CD14-positive monocyte (primary cell): ENCODE measurements at regions of chr1 and their contacts with region 1.

Region 1: DNA sequence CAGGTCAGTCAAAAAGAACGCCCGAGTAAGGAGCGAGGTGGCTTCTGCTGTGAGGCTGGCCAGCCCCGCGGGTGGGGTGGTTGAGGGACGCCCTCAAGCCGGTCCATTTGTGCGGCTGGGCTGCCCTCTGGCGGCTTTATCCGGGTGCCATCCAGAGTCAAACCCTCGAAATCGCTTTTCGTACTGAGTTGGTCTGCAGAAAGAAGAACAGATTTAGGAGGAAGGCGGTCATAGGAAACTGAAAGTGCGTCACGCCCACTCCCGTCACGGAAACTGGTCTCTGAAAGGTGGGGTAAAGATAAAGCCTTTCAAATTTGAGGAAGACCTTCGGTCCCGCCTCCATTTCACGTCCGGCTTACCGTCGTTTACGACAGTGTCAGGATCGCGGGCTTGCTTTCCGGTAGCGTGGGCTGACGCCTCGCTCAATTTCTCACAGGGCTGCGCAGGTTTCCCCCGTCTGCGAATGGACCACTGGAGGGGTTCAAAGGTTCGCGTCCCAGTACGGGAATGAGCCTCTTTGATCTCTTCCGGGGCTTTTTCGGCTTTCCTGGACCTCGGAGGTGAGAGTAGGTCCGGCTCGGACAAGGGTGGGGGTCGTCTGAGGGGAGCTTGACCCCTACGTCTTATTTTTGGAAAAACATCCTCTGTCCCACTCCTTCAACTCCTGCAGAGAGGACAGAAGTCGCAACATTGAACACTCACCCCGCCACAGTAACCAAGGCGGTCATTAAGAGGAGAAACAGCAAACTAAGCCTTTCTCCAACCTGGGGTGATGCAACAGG is at the start of gene HAX1:
- DNase-seq: peak; percentile 98 to 99 (median 99)
- H3K4me3 ChIP-seq: peak within 1 kb of the TSS; percentile 71 to 93 (median 76)
- H3K4me3 Mint-ChIP-seq: peak within 1 kb of the TSS; percentile 95 to 98
- H3K27ac ChIP-seq: peak within 1 kb of the TSS; percentile 88 to 94
- H3K27ac Mint-ChIP-seq: peak within 1 kb of the TSS; percentile 96 to 99 (median 97)
- H3K4me1 ChIP-seq: peaks cover 16 to 20% of the 10 kb centered on the region in 2 donors
- H3K4me1 Mint-ChIP-seq: peaks cover 23% of the 10 kb centered on the region
- H3K27me3 ChIP-seq: no peaks in the 10 kb centered on the region
- H3K27me3 Mint-ChIP-seq: peaks cover 0 to 3% (median 0%) of the 10 kb centered on the region in 3 donors
- CTCF ChIP-seq: peak; percentile 83
- polyA plus RNA-seq, gene HAX1: 51.4 to 94.9 (median 91.7) TPM

Region 2: DNA sequence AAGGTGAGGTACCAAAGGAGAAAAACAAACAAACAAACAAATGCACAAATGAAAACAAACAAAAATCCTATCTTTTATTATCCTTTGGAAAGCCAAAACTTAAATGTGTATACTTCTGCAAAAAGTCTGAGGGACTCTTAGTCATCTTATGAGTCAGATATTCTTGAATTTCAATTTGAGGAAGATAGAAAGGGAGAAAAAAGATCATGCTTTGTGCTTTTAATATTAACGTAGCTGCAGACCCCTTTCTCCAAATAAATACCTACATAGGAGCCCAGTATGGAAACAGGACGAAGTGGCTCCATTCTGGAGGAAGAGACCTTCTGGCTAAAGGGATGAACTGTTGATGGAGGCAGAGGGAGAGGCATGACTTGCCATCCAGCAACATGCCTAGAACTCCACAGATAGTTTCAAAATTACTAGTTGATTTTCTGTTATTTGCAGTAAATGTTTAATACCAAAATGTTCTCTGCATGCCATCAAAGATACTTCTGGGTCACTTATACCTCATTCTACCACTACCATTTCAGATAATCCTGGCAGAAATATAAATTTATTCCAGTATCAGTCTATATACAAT is 142.9 kb before region 1 on chr1:
- intact Hi-C with region 1: no loop called
- DNase-seq: peak; percentile 37 to 66 (median 64)
- H3K4me3 ChIP-seq: peak overlapping the region in 2 of 3 experiments; percentile 12 to 66
- H3K4me3 Mint-ChIP-seq: peak overlapping the region in 1 of 2 donors; percentile 80
- H3K27ac ChIP-seq: peak overlapping the region; percentile 32 to 73
- H3K27ac Mint-ChIP-seq: peak overlapping the region; percentile 69 to 94 (median 87)
- H3K4me1 ChIP-seq: peaks cover 17 to 21% of the 10 kb centered on the region in 2 donors
- H3K4me1 Mint-ChIP-seq: peaks cover 15% of the 10 kb centered on the region
- H3K27me3 ChIP-seq: no peaks in the 10 kb centered on the region
- H3K27me3 Mint-ChIP-seq: peaks cover 0 to 1% (median 0%) of the 10 kb centered on the region in 3 donors
- CTCF ChIP-seq: no peak

Region 3: DNA sequence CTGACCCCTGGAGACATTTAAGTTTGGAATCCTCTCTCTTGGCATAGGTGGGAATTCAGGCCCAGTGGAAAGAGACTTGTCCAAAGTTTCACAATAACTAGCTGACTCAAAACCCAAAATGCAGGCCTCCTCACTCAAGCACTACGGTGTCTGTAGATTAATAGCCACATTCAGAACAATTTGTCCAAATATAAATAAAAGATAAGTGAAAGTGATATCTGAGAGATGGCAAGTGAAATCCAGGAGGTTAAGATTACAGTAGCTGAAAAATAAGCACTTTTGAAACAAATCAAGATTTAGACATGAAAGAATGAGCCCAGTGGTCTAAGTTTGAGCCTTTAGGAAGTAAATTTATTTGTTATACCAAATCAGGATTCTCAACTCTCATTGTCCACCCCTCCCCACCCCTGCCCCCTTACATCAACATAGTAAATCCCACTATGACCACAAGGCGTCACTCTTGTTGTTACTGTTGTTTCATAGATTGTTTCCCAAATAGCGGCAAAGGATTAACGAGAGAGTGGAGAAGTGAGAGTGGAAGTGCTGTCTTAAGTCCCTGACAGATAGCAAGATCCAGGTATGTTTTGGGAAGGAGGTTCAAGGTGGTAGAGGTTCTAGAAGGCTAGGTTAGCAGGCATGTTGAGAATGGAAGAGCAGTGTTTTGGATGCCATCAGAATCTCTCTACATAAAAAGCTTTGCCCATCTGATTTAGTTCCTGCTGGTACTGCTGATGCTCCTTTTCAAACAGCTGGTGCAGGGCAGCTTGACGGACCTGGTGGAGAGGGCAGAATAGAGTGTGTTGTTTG is 73.4 kb before region 1 on chr1:
- intact Hi-C with region 1: loop called in 1 of 2 experiments (anchors 5 kb)
- DNase-seq: peak; percentile 44 to 72 (median 63)
- H3K4me3 ChIP-seq: no peak overlapping the region
- H3K4me3 Mint-ChIP-seq: no peak overlapping the region
- H3K27ac ChIP-seq: no peak overlapping the region
- H3K27ac Mint-ChIP-seq: no peak overlapping the region
- H3K4me1 ChIP-seq: peaks cover 6 to 16% of the 10 kb centered on the region in 2 donors
- H3K4me1 Mint-ChIP-seq: peaks cover 12% of the 10 kb centered on the region
- H3K27me3 ChIP-seq: no peaks in the 10 kb centered on the region
- H3K27me3 Mint-ChIP-seq: peaks cover 0 to 1% (median 1%) of the 10 kb centered on the region in 3 donors
- CTCF ChIP-seq: peak; percentile 71

Region 4: GRCh38 chr1:154220071-154220969 is 52.1 kb before region 1 on chr1 and contains the start of gene UBAP2L:
- intact Hi-C with region 1: loop called in 1 of 2 experiments (anchors 5 kb)
- DNase-seq: peak; percentile 98 to 100 (median 100)
- H3K4me3 ChIP-seq: peak within 1 kb of the TSS; percentile 92 to 97 (median 96)
- H3K4me3 Mint-ChIP-seq: peak within 1 kb of the TSS; percentile 82 to 97
- H3K27ac ChIP-seq: peak within 1 kb of the TSS; percentile 100
- H3K27ac Mint-ChIP-seq: peak within 1 kb of the TSS; percentile 99 to 100 (median 99)
- H3K4me1 ChIP-seq: peaks cover 31 to 36% of the 10 kb centered on the region in 2 donors
- H3K4me1 Mint-ChIP-seq: peaks cover 46% of the 10 kb centered on the region
- H3K27me3 ChIP-seq: no peaks in the 10 kb centered on the region
- H3K27me3 Mint-ChIP-seq: peaks cover 0 to 5% (median 2%) of the 10 kb centered on the region in 3 donors
- CTCF ChIP-seq: no peak
- polyA plus RNA-seq, gene UBAP2L: 40.1 to 200 (median 46.8) TPM

Region 5: GRCh38 chr1:154241703-154242351 is 30.6 kb before region 1 on chr1:
- intact Hi-C with region 1: no loop called
- DNase-seq: no peak
- H3K4me3 ChIP-seq: no peak overlapping the region
- H3K4me3 Mint-ChIP-seq: no peak overlapping the region
- H3K27ac ChIP-seq: no peak overlapping the region
- H3K27ac Mint-ChIP-seq: peak overlapping the region in 2 of 7 donors; percentile 25 to 26
- H3K4me1 ChIP-seq: no peaks in the 10 kb centered on the region
- H3K4me1 Mint-ChIP-seq: no peaks in the 10 kb centered on the region
- H3K27me3 ChIP-seq: no peaks in the 10 kb centered on the region
- H3K27me3 Mint-ChIP-seq: no peaks in the 10 kb centered on the region
- CTCF ChIP-seq: no peak